ENCODE measurements at regions of chr6 and their contacts with region 1.

Region 1: DNA sequence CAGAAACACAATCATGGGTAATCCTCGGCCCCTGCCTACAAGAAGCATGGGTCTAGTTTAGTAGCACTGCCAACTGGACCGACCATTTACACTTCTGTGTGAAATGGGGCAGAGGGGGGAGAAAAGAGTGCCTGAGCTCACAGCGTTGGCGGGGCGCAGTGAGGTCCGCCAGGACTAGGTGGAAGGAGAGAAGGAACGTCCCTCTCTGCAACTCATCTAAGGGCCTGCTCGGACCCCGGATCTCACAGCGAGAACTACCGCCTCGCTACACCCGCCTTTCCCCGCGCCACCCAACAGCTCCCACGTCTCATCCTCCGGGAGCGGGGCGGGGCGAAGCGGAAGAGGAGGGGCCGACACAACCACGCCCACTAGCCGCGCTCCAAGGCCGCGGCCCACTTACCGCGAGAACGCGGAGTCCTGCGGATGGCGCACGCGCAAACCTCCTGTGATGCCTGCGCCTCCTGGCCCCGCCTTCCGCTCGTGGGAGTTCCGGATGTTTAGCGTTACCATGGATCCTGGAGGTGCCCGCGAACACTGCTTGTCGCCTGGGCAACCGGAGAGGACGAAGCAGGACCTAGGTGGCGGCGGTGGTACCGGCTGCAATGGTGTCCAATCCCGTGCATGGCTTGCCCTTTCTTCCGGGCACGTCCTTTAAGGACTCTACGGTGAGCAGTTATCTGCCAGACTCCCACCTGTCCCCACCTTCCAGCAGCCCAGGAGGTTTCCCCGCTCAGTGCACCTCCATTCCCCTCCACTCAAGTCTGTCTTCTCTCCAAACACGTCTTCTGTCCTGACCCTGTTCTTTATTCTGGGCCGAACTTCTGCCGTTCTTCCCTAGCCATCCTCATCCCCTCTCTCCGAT is at the start of gene EFHC1:
- DNase-seq: peak; percentile 99
- H3K4me3 ChIP-seq: peak within 1 kb of the TSS; percentile 79 to 96 (median 92)
- H3K27ac ChIP-seq: peak within 1 kb of the TSS; percentile 71 to 89 (median 85)
- H3K4me1 ChIP-seq: peaks cover 6 to 49% (median 35%) of the 10 kb centered on the region in 6 donors
- H3K27me3 ChIP-seq: no peaks in the 10 kb centered on the region
- CTCF ChIP-seq: peak in 4 of 11 experiments; percentile 12 to 60 (median 34)
- POLR2A ChIP-seq: peak in 1 of 3 donors; percentile 28
- total RNA-seq, gene EFHC1: 9.3 to 29.4 (median 16.7) TPM

Region 2: DNA sequence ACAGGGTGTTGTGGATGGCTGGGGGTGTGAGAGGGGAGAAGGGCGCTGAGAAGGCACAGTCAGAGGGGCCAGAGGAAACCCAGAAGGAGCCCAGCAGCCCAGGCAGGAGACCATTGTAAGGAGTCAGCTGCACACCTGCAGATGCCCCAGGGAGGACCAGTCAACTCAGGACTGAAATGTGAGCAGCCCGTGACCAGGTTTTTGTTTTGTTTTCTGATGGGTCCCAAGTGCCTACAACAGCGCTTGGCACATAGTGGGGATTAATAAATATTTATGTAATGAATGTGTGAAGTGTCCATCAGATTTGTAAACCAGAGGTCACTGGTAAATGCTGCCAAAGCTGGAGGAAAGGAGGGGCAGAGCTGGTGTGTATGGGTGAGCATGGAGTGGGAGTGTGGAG is 126.6 kb after region 1 on chr6:
- intact Hi-C with region 1: no loop called
- DNase-seq: no peak
- H3K4me3 ChIP-seq: no peak overlapping the region
- H3K27ac ChIP-seq: peak overlapping the region in 4 of 8 donors; percentile 23 to 67 (median 58)
- H3K4me1 ChIP-seq: peaks cover 23 to 90% (median 50%) of the 10 kb centered on the region in 6 donors
- H3K27me3 ChIP-seq: no peaks in the 10 kb centered on the region
- CTCF ChIP-seq: no peak
- POLR2A ChIP-seq: no peak

Region 3: GRCh38 chr6:52577022-52577777 is 157.2 kb after region 1 on chr6 and contains the start of gene TRAM2:
- intact Hi-C with region 1: loop called (anchors 5 kb)
- DNase-seq: peak; percentile 96
- H3K4me3 ChIP-seq: peak within 1 kb of the TSS; percentile 65 to 95 (median 82)
- H3K27ac ChIP-seq: peak within 1 kb of the TSS; percentile 90 to 99 (median 98)
- H3K4me1 ChIP-seq: peaks cover 25 to 58% (median 56%) of the 10 kb centered on the region in 6 donors
- H3K27me3 ChIP-seq: no peaks in the 10 kb centered on the region
- CTCF ChIP-seq: no peak
- POLR2A ChIP-seq: peak in 1 of 3 donors; percentile 41
- total RNA-seq, gene TRAM2: 26.7 to 47.7 (median 40.1) TPM

Region 4: GRCh38 chr6:52610745-52611355 is 190.8 kb after region 1 on chr6:
- intact Hi-C with region 1: no loop called
- DNase-seq: no peak
- H3K4me3 ChIP-seq: no peak overlapping the region
- H3K27ac ChIP-seq: peak overlapping the region in 1 of 8 donors; percentile 42
- H3K4me1 ChIP-seq: peaks cover 0 to 11% (median 3%) of the 10 kb centered on the region in 6 donors
- H3K27me3 ChIP-seq: no peaks in the 10 kb centered on the region
- CTCF ChIP-seq: no peak
- POLR2A ChIP-seq: no peak

Region 5: GRCh38 chr6:52664186-52664990 is 244.3 kb after region 1 on chr6:
- intact Hi-C with region 1: loop called (anchors 2 kb)
- DNase-seq: peak; percentile 91
- H3K4me3 ChIP-seq: peak overlapping the region; percentile 37 to 76 (median 63)
- H3K27ac ChIP-seq: peak overlapping the region; percentile 20 to 81 (median 71)
- H3K4me1 ChIP-seq: peaks cover 8 to 53% (median 37%) of the 10 kb centered on the region in 6 donors
- H3K27me3 ChIP-seq: peaks cover 0 to 15% (median 0%) of the 10 kb centered on the region in 7 donors
- CTCF ChIP-seq: no peak
- POLR2A ChIP-seq: peak in 2 of 3 donors; percentile 38 to 85

Measured in spleen (tissue), 13 donors.